AG04449 (cell line): ENCODE measurements at regions of chr1 and their contacts with region 1.

Region 1: DNA sequence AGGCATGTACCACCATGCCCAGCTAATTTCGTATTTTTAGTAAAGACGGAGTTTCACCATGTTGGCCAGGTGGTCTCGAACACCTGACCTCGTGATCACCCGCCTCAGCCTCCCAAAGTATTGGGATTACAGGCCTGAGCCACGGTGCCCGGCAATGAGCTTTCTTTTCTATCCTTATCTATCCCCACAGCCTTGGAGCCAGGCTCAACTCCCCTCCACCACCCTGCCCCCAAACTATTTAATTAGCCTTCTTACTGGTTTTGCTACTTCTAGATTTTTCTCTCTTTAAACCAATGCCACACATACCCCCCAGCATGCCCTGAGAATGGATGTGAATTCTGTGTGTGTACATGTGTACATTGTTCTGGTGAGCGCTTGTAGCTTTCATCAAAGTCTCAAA is 5.7 kb upstream of the VANGL2 start:
- DNase-seq: no peak
- H3K4me3 ChIP-seq: no peak overlapping the region
- CTCF ChIP-seq: no peak

Region 2: DNA sequence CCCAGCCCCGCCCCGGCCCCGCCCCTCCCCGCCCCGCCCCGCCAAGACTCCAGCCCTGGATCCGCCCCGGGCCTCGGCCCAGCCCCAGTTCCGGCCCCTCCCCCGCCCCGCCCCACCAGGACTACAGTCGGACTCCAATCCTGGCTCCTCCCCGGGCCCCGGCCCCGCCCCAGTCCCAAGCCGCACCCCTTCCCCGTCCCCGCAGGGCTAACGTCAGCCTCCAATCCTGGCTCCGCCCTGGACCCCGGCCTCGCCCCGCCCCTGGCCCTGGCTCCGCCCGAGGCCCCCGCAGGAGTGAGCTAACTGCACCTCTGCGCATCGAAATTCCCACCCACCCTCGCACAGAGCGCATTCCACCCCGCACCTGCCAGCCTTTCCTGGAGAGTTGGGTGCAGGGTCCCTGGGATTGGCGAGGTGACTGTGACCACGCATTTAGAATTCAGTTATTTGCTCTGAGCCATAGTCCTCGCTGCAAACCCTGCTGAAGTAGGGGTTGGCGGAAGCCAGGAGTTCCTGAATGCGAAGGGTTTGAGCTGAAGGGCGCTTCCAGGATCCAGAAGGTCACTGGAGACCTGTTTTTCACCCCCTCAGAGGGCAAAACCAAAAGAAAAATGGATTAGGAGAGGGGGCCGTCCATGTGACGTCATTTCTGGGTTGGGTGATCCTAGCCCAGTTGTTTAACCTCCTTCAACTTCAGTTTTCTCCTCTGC is 295.7 kb before region 1 on chr1:
- CTCF ChIA-PET with region 1: no interaction called
- POLR2A ChIA-PET with region 1: no interaction called
- DNase-seq: peak; percentile 29
- H3K4me3 ChIP-seq: peak overlapping the region; percentile 72
- CTCF ChIP-seq: no peak

Region 3: GRCh38 chr1:160376525-160377131 is 18.0 kb before region 1 on chr1:
- CTCF ChIA-PET with region 1: interaction called, 36 read pairs
- POLR2A ChIA-PET with region 1: interaction called, 4 read pairs
- DNase-seq: no peak
- H3K4me3 ChIP-seq: no peak overlapping the region
- CTCF ChIP-seq: peak; percentile 84